ENCODE measurements at regions of chr1 and their contacts with region 1.

Region 1: GRCh38 chr1:55575571-55576279 is 360.6 kb upstream of the USP24 start:
- DNase-seq: no peak

Region 2: GRCh38 chr1:55555956-55556725 is 19.6 kb before region 1 on chr1:
- intact Hi-C with region 1: loop called in 1 of 2 experiments (anchors 1 kb)
- DNase-seq: no peak

Region 3: DNA sequence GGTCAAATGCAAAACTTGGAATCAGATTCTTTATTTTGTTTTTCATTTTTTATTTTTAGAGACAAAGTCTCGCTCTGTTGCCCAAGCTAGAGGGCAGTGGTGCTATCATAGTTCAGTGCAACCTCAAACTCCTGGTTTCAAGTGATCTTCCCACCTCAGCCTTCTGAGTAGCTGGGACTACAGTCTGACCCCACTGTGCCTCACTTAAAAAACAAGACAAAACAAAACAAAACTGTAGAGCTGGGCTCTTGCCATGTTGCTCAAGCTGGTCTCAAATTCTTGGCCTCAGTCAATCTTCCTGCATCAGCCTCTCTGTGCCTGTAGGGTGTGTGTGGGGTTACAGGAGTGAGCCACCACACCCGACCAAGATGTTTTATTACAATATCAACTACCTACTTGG is 35.4 kb after region 1 on chr1:
- intact Hi-C with region 1: no loop called
- DNase-seq: no peak

Measured in posterior vena cava (tissue), 2 donors.